ENCODE measurements at regions of chr1 and their contacts with region 1.

Region 1: DNA sequence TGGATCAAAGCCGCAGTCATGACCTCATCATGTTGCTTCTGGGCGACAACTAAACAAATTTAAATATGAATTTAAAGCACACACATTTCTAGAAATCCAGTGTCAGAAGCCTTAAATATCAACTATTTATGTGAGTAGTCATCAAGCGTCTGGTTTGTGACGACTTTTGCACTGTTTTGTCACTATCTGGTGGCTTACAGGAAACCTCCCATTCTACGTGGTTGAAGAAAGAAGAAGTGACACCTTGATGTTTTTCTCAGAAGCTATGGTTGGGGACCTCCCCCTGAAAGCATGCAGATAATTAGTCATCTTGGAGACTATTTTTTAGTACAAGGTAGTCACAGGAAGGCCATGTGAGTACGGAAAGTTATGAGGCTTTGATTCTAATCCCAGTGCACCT is 58.5 kb downstream of the TENT5C start:
- DNase-seq: peak; percentile 76
- H3K4me3 Mint-ChIP-seq: no peak overlapping the region
- H3K27ac Mint-ChIP-seq: peak overlapping the region; percentile 68
- H3K4me1 Mint-ChIP-seq: peaks cover 78% of the 10 kb centered on the region
- H3K27me3 Mint-ChIP-seq: no peaks in the 10 kb centered on the region

Region 2: GRCh38 chr1:117359561-117360289 is 304.6 kb before region 1 on chr1:
- CTCF ChIA-PET with region 1: no interaction called
- POLR2A ChIA-PET with region 1: no interaction called
- intact Hi-C with region 1: loop called (anchors 2 kb)
- DNase-seq: no peak
- H3K4me3 Mint-ChIP-seq: peak overlapping the region; percentile 13
- H3K27ac Mint-ChIP-seq: no peak overlapping the region
- H3K4me1 Mint-ChIP-seq: peaks cover 37% of the 10 kb centered on the region
- H3K27me3 Mint-ChIP-seq: peaks cover 3% of the 10 kb centered on the region

Region 3: GRCh38 chr1:117605774-117606648 is 58.3 kb before region 1 on chr1 and contains the start of gene TENT5C:
- CTCF ChIA-PET with region 1: interaction called, 6 read pairs
- POLR2A ChIA-PET with region 1: interaction called, 83 read pairs
- intact Hi-C with region 1: loop called (anchors 1 kb)
- DNase-seq: peak; percentile 99
- H3K4me3 Mint-ChIP-seq: peak within 1 kb of the TSS; percentile 91
- H3K27ac Mint-ChIP-seq: peak within 1 kb of the TSS; percentile 94
- H3K4me1 Mint-ChIP-seq: peaks cover 41% of the 10 kb centered on the region
- H3K27me3 Mint-ChIP-seq: no peaks in the 10 kb centered on the region
- total RNA-seq, gene TENT5C: 13.8 to 14.0 TPM

Region 4: DNA sequence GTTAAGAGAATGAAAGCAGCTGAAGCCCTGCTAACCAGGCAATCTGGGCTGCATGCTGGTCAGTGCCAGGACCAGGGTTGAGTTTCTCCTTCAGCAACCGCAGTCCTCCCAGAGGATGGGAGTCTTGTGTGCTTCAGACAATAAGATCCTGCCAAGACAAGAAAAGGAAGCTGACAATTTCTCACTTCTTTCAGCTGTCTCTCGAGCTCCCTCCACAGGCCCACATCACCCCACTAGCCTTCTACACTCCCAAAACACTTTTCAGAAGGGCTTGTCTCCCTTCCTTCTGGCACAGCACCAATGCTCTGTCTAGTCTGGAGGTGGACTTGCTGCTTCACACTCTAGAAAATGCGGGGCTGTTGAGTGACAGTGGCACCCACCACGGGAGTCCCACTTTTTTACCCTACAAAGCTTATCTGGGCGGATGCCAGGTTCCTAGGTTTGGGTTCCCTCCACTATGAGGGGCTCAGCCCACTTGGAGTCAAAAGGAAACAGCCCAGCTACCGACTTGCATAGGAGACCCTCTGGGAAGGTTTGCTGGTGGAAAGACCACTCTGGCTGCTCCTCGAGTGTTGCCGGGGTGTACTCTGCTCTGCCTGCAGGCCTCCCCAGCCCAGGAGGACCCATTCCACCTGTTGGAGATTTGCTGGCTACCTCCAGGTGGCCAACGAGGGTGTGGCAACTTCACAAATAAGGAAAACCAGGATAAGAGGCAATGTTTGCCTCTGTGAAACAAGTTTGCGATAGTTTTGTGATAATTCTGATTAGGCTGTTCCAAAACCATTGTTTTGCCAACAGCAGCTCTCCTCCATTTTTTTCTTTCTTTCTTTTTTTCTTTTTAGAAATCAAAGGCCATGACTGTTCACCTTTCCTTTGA is 10.4 kb after region 1 on chr1:
- CTCF ChIA-PET with region 1: interaction called, 17 read pairs
- POLR2A ChIA-PET with region 1: no interaction called
- intact Hi-C with region 1: no loop called
- DNase-seq: peak; percentile 68
- H3K4me3 Mint-ChIP-seq: no peak overlapping the region
- H3K27ac Mint-ChIP-seq: no peak overlapping the region
- H3K4me1 Mint-ChIP-seq: peaks cover 16% of the 10 kb centered on the region
- H3K27me3 Mint-ChIP-seq: no peaks in the 10 kb centered on the region

Region 5: DNA sequence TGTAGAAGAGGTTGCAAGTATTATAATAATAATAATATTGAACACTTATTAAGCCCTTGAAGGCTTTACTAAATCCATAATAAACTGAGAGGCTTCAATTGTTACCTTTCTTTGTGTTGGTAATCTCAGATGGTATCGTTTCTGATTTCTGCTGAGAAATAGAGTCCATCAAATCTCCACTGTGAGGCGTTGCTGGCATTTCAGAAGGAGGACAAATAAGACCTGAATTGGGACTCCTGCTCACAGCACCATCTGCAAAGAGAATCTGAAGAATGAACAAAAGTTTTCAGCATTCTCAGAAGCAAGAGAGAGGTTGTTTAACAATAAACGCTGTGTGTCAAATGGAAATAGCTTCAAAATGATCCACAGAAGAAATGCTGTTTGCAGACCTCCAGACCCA is 358.9 kb after region 1 on chr1:
- CTCF ChIA-PET with region 1: no interaction called
- POLR2A ChIA-PET with region 1: no interaction called
- intact Hi-C with region 1: no loop called
- DNase-seq: no peak
- H3K4me3 Mint-ChIP-seq: no peak overlapping the region
- H3K27ac Mint-ChIP-seq: no peak overlapping the region
- H3K4me1 Mint-ChIP-seq: no peaks in the 10 kb centered on the region
- H3K27me3 Mint-ChIP-seq: peaks cover 15% of the 10 kb centered on the region